ENCODE measurements at regions of chr16 and their contacts with region 1.

Region 1: DNA sequence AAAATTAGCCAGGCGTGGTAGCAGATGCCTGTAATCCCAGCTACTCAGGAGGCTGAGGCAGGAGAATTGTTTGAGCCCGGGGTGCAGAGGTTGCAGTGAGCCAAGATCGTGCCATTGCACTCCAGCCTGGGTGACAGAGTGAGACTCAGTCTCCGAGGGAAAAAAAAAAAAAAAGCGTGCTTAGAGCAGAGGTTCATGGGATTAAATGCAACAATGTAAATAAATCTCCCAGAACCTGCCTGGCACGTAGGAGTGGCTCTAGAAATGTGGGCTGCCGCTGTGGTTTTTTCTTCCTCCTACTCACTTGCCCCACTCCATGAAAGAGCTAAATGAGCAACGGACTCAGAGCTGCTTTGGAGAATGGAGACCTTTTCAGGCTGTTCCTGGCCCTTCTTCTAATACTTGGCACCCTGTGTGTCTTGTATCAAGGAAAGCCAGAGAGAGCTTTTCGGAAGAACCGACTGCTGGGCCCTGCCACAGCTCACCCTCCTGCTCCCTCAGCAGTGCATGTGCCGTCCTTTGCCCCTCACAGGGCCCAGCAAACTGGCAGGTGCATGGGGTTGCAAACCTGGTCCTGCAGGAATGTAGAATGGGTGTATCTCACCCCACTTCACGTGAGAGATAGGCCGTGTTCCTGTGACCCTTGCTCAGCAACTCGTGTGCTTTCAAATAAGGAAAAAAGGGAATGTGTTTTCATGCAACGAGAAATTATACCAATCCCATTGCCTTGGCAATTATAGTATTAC is 52.0 kb downstream of the LDHD start:
- DNase-seq: peak; percentile 17
- H3K4me3 Mint-ChIP-seq: peak overlapping the region; percentile 70
- H3K27ac Mint-ChIP-seq: peak overlapping the region; percentile 85
- H3K4me1 Mint-ChIP-seq: peaks cover 79% of the 10 kb centered on the region
- H3K27me3 Mint-ChIP-seq: no peaks in the 10 kb centered on the region

Region 2: DNA sequence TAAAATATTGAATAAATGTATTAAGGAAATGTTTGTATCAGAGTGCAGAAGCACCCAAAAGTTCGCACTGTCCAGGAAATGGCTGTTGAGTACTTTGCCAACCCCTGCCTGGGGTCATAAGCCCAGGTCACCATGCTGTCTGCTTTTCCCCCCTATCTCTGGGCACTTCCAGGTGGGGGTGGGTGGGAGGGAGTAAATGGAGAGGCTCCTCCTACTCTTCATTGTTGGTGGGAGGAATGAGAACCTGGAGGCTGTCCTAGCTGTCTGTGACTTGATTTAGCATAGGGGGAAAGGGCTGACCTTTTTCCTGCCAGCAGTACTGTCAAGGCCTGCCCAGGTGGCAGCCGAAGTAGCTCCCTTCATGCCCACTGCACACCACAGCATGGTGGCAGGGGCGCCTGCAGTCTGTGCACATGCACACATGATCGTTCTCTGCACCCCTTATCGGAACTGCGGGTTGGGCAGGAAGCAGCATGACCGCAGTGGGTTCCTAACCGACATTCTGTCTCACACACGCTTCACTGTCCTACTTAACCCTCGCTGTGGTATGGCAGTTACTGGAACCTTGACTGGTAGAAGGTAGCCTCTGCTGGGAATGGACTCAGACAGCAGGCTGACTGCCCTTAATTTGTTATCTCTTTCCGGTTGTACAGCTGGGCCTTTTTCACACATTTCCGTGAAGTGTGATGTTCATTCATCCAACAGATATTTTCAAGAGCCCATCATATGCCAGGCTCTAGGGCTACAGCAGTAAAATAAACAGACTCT is 10.5 kb after region 1 on chr16:
- intact Hi-C with region 1: loop called (anchors 1 kb)
- DNase-seq: peak; percentile 83
- H3K4me3 Mint-ChIP-seq: peak overlapping the region; percentile 74
- H3K27ac Mint-ChIP-seq: peak overlapping the region; percentile 92
- H3K4me1 Mint-ChIP-seq: peaks cover 78% of the 10 kb centered on the region
- H3K27me3 Mint-ChIP-seq: no peaks in the 10 kb centered on the region

Region 3: DNA sequence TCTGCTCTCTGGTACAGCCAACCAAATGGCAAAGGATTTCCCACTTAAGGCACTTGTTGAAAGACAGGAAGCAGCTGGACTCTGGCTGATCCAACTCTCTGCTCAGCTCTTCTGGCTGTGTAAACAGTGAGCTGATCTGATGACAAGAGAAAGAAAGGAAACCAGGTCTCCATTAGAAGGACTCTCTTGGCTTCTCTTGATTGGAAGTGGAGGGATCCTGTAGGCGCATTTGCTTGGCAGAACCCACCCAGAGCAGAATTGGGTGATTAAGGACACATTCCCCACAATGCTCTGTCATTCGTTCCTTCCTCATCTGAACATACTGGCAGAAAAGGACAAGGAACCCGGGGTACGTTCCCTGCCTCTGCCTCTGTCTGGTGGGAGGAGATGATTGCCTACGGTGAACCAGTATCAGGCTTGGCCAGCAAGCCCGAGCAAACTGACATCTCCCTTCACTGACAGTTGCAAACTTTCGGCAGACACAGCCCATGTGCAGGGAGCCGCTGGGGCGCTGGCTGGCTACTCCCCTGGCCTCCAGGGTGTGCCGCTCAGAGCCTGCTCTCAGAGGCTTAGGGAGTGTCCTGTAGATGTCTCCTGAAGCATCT is 22.9 kb after region 1 on chr16:
- intact Hi-C with region 1: no loop called
- DNase-seq: no peak
- H3K4me3 Mint-ChIP-seq: no peak overlapping the region
- H3K27ac Mint-ChIP-seq: no peak overlapping the region
- H3K4me1 Mint-ChIP-seq: peaks cover 73% of the 10 kb centered on the region
- H3K27me3 Mint-ChIP-seq: no peaks in the 10 kb centered on the region

Region 4: DNA sequence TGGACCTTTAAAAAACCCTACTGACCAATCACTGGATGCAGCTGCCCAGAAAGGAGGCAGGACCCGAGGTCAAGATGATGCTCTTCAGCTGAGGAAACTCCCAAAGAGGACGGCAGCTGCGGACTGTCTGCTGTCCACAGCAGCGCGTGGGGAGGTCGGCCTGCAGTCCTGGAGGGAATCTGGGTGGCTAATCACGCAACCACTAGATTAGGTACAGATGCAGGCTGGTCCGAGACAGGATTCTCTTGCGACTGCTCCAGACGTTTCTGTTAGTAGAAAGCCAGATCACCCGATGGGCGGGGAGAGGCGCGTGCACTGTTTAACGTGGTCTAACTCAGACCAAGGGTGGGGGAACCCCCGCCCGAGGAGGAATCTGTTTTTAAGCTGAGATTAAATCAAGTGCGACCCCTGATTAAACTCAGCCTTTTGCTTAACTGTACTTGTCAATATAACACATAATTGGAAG is 133.6 kb after region 1 on chr16:
- intact Hi-C with region 1: no loop called
- DNase-seq: no peak
- H3K4me3 Mint-ChIP-seq: no peak overlapping the region
- H3K27ac Mint-ChIP-seq: no peak overlapping the region
- H3K4me1 Mint-ChIP-seq: peaks cover 11% of the 10 kb centered on the region
- H3K27me3 Mint-ChIP-seq: peaks cover 35% of the 10 kb centered on the region

Measured in activated T-helper 1 cell treated with anti-CD3 and anti-CD28 coated beads, Interleukin-12 subunit alpha, Interleukin-12 subunit beta, Interleukin-2, Interleukin-4 antibody, amounts not matched to agents 30 ng/mL and 10 ng/mL and 1 ng/mL, durations not matched to agents 14 hours and 24 hours and 36 hours (primary cell).